ENCODE measurements at regions of chr12 and their contacts with region 1.

Region 1: DNA sequence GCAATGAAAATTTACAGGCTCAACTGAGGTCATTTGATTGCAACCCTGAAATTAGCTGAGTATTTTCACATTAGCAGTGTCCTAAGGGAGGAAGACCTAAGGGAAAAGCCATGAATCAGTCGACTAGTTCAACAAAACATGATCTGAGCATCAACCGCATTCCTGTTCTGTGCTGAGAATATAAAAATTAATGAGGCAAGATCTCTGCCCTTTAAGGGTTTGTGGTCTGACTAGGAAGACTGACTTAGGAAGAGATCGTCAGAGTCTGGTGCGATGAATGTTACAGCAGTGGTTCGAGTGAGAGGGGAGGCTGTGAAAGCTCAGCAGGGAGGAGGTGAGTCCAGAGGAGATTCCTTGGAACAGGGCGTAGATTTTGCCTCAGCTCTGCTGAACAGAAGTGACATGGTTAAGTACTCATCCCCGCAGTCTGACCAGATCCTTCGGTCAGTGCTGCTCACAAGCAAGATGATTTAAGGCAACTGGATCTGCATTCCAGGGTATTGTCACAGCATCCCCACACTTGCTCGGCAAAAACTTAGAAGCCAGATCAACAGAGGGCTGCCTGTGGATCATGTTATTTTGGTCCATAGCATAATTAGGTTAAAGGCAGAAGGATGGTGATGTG is 49.6 kb downstream of the BMAL2 start:
- DNase-seq: peak; percentile 90
- H3K4me3 ChIP-seq: no peak overlapping the region
- H3K27me3 ChIP-seq: no peaks in the 10 kb centered on the region
- CTCF ChIP-seq: no peak

Region 2: DNA sequence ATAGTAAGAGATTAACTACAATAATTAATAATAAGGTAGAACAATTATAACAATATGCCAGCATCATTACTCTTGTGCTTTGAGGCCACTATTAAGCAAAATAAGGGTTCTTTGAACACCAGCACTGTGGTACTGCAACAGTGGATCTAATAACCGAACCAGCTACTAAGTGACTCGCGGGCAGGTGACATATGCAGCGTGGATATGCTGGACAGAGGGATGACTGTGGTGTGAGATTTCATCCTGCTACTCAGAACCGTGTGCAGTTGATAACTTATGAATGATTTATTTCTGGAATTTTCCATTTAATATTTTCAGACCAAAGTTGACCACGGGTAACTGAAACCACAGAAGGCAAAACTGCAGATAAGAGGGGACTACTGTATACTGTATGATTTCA is 15.2 kb before region 1 on chr12:
- CTCF ChIA-PET with region 1: interaction called, 33 read pairs
- POLR2A ChIA-PET with region 1: no interaction called
- DNase-seq: no peak
- H3K4me3 ChIP-seq: no peak overlapping the region
- H3K27me3 ChIP-seq: no peaks in the 10 kb centered on the region
- CTCF ChIP-seq: no peak

Region 3: GRCh38 chr12:27523642-27524493 is 141.6 kb after region 1 on chr12 and contains the start of gene PPFIBP1:
- CTCF ChIA-PET with region 1: no interaction called
- POLR2A ChIA-PET with region 1: no interaction called
- DNase-seq: peak; percentile 95
- H3K4me3 ChIP-seq: peak within 1 kb of the TSS; percentile 88
- H3K27me3 ChIP-seq: no peaks in the 10 kb centered on the region
- CTCF ChIP-seq: peak; percentile 43
- polyA plus RNA-seq, gene PPFIBP1: 47.5 and 67.4 TPM in 2 replicates

Measured in BJ (cell line).